ENCODE measurements at regions of chr12 and their contacts with region 1.

Region 1: GRCh38 chr12:122691575-122691965 is 11.6 kb downstream of the HCAR2 start:
- DNase-seq: no peak
- H3K4me3 ChIP-seq: no peak overlapping the region
- H3K27ac ChIP-seq: no peak overlapping the region
- H3K4me1 ChIP-seq: no peaks in the 10 kb centered on the region
- H3K27me3 ChIP-seq: no peaks in the 10 kb centered on the region
- CTCF ChIP-seq: no peak

Region 2: DNA sequence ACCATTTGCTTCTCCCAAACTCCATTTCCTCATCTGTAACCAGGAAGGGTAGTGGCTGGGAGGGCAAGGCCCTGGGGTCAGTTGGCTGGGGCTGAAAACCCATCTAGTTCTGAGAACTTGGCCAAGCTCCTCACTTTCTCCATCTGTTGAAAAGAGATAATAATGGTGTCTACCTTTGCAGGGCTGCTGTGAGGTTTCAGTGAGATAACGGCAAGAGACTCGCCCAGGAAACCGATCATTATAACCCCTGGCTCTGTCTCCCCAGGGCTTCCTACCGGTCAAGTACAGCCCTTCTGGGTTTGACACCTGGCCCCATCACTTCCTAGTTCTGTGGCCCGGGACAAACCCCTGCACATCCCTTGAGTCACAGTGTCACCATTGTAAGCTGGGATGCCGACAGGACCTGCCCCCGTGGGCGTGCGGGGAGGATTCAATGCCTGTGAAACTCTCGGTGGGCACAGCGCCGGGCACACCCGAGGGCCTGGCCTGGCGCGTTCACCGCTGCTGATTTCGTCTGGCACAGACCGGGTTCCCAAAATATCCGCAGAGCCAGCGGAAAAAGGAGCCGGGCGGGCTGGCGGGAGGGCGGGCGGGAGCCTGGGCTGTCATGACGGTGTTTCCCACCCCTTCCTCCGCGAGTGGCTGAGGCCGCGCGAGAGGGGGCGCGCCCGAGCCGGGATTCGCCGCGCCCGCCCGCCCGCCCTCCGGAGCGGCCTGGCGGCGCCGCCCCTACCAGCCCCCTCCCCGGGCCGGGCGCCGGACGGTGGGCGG is 696.8 kb after region 1 on chr12:
- CTCF ChIA-PET with region 1: no interaction called
- POLR2A ChIA-PET with region 1: no interaction called
- intact Hi-C with region 1: no loop called
- DNase-seq: peak; percentile 85
- H3K4me3 ChIP-seq: peak overlapping the region; percentile 61
- H3K27ac ChIP-seq: peak overlapping the region; percentile 77
- H3K4me1 ChIP-seq: peaks cover 18% of the 10 kb centered on the region
- H3K27me3 ChIP-seq: no peaks in the 10 kb centered on the region
- CTCF ChIP-seq: no peak

Region 3: DNA sequence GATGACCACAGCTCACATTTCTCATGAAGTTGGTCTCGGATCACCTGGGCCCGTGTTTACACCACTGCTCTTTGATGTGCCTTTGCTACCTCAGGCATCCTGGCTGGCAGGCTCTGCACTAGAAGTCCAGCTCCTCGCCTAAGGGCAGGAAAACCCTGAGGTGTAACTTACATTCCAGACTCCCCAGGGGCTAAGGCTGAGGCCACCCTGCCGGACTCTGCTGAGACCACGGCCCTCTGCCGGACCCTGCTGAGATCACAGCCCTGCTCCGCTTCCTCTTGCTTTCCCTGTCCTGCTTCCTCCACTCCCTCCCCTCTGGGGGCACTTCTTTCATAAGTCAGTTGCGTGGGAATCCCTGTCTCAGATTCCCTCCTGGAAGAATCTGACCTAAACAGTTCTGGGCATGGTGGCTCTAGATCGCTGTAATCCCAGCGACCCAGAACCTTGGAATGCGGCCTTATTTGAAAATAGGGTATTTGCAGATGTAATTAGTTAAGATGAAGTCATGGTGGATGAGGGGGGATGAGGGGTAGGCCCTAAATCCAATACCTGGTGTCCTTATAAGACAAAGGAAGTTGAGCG is 824.7 kb after region 1 on chr12:
- CTCF ChIA-PET with region 1: no interaction called
- POLR2A ChIA-PET with region 1: interaction called, 11 read pairs
- intact Hi-C with region 1: no loop called
- DNase-seq: no peak
- H3K4me3 ChIP-seq: no peak overlapping the region
- H3K27ac ChIP-seq: no peak overlapping the region
- H3K4me1 ChIP-seq: no peaks in the 10 kb centered on the region
- H3K27me3 ChIP-seq: no peaks in the 10 kb centered on the region
- CTCF ChIP-seq: no peak

Measured in A673 (cell line).